ENCODE measurements at regions of chr20 and their contacts with region 1.

Region 1: GRCh38 chr20:45044084-45044573 is 56.8 kb downstream of the KCNS1 start:
- DNase-seq: no peak
- ATAC-seq: peak; percentile 87 to 94 (median 90)
- H3K4me3 ChIP-seq: no peak overlapping the region
- H3K27ac ChIP-seq: no peak overlapping the region
- H3K4me1 ChIP-seq: no peaks in the 10 kb centered on the region
- H3K27me3 ChIP-seq: no peaks in the 10 kb centered on the region
- CTCF ChIP-seq: peak; percentile 80 to 88 (median 88)
- POLR2A ChIP-seq: no peak

Region 2: DNA sequence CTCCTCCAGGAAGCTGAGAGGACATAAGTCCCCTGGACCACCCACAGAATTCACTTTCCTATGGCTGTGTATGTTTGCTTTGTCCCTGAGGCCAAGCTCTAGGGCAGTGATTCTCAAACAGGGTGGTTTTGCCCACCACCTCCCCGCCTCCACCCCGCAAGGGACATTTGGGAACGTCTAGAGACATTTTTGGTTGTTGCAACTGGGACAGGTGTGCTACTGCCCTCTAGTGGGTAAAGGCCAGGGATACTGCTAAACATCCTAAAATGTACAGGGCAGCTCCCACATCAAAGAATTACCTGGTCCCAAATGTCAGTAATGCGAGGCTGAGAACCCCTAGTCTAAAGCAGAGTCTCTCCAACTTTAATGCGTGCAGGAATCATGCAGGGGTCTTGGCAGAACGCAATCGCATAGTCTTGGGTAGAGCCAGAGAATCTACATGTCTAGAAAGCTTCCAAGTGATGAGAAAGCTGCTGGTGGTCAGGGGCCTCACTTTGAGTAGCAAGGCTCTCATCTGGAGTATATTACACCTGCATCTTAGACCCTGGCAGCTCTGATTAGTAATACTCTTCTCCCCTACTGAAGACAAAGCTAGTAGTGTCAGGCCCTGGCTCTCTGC is 51.7 kb after region 1 on chr20:
- intact Hi-C with region 1: loop called (anchors 10 kb)
- DNase-seq: peak in 1 of 3 donors; percentile 62
- ATAC-seq: peak; percentile 76 to 85 (median 79)
- H3K4me3 ChIP-seq: no peak overlapping the region
- H3K27ac ChIP-seq: no peak overlapping the region
- H3K4me1 ChIP-seq: peaks cover 0 to 7% (median 0%) of the 10 kb centered on the region in 4 donors
- H3K27me3 ChIP-seq: peaks cover 4 to 10% of the 10 kb centered on the region in 2 donors
- CTCF ChIP-seq: peak; percentile 55 to 76 (median 74)
- POLR2A ChIP-seq: no peak

Measured in right lobe of liver (tissue), 6 donors.